B cell (primary cell): ENCODE measurements at regions of chr1 and their contacts with region 1.

Region 1: GRCh38 chr1:226083302-226084101 is 21.0 kb downstream of the H3-3A start:
- DNase-seq: peak; percentile 94
- ATAC-seq: peak; percentile 94
- H3K4me3 ChIP-seq: peak overlapping the region; percentile 15 to 83 (median 73)
- H3K4me3 Mint-ChIP-seq: peak overlapping the region; percentile 91
- H3K27ac ChIP-seq: peak overlapping the region; percentile 13 to 71
- H3K27ac Mint-ChIP-seq: peak overlapping the region; percentile 87
- H3K4me1 ChIP-seq: peaks cover 6 to 19% of the 10 kb centered on the region in 2 donors
- H3K4me1 Mint-ChIP-seq: peaks cover 13% of the 10 kb centered on the region
- H3K27me3 ChIP-seq: no peaks in the 10 kb centered on the region
- H3K27me3 Mint-ChIP-seq: no peaks in the 10 kb centered on the region
- CTCF ChIP-seq: no peak

Region 2: DNA sequence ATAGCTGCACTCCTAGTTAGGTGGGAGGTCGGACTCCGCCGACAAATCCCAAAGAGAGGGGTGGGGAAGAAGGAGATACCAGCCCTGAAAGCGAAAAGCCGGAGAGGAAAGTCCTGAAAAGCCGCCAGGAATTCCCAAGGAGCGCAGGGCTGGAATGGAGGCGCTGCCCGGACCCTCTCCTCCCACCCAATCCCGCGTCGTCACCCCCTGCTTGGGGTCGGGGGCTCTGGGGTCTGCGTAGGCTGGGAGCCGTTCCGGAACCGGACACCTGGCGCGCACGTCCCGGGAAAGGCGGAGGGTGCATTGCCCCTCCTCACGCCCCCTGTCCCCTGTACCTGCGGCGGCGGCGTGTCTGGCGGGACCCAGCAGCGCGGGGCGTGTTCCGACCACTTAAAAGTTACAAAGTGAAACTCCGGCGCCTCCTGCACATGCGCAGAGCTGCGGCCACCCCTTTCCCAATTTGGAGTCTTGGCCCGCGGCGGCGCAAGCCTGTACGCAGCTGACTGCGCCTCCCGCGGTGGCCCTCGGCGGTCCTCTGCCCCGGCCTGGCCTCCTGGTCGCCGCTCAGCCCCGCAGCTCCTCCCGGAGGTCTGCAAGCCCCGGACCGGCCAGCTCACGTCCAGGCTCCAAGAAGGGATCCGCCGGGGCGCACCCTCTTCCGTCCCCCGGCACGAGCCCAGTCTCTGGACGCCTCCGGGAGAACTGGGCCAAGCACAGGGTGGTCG is 201.4 kb before region 1 on chr1 and contains the start of gene TMEM63A:
- CTCF ChIA-PET with region 1: no interaction called
- POLR2A ChIA-PET with region 1: no interaction called
- intact Hi-C with region 1: no loop called
- DNase-seq: peak; percentile 91
- ATAC-seq: peak; percentile 78
- H3K4me3 ChIP-seq: peak within 1 kb of the TSS; percentile 86 to 99 (median 96)
- H3K4me3 Mint-ChIP-seq: peak within 1 kb of the TSS; percentile 96
- H3K27ac ChIP-seq: peak within 1 kb of the TSS; percentile 51 to 74
- H3K27ac Mint-ChIP-seq: peak within 1 kb of the TSS; percentile 91
- H3K4me1 ChIP-seq: peaks cover 30 to 42% of the 10 kb centered on the region in 2 donors
- H3K4me1 Mint-ChIP-seq: peaks cover 48% of the 10 kb centered on the region
- H3K27me3 ChIP-seq: no peaks in the 10 kb centered on the region
- H3K27me3 Mint-ChIP-seq: no peaks in the 10 kb centered on the region
- CTCF ChIP-seq: peak; percentile 23
- total RNA-seq, gene TMEM63A: 238 and 267 TPM in 2 replicates

Region 3: DNA sequence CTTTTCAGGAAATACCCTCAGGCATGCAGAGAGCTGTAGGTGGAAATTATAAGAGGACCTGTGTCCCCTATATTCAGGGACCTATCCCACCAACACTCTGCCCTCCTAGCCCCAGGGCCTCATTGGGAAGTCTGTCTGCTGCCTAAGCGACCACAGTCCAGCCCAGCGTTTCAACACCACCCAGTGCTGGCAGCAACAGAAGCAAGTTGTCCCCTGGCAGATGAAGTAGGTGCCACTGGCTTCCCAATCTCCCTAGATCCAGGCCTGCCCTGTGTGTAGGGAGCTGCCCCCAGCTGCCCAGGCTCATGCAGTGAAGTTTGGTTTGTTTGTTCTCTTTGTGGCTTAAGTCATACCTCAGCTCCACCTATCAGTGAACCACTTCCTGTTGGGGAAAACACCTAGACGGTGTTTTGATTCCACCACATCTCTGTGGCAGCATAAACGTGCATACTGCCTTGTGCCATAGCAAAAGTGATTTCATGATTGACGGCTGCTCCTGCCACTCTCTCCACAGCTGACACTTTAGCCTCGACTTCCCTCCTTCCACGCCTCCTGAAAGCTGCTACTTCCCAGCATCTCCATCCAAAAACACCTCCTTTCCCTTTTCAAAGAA is 186.5 kb before region 1 on chr1:
- CTCF ChIA-PET with region 1: no interaction called
- POLR2A ChIA-PET with region 1: no interaction called
- intact Hi-C with region 1: no loop called
- DNase-seq: peak; percentile 89
- ATAC-seq: peak; percentile 98
- H3K4me3 ChIP-seq: peak overlapping the region in 1 of 5 experiments; percentile 26
- H3K4me3 Mint-ChIP-seq: peak overlapping the region; percentile 71
- H3K27ac ChIP-seq: peak overlapping the region; percentile 86 to 97
- H3K27ac Mint-ChIP-seq: peak overlapping the region; percentile 98
- H3K4me1 ChIP-seq: peaks cover 34 to 36% of the 10 kb centered on the region in 2 donors
- H3K4me1 Mint-ChIP-seq: peaks cover 36% of the 10 kb centered on the region
- H3K27me3 ChIP-seq: no peaks in the 10 kb centered on the region
- H3K27me3 Mint-ChIP-seq: no peaks in the 10 kb centered on the region
- CTCF ChIP-seq: no peak

Region 4: DNA sequence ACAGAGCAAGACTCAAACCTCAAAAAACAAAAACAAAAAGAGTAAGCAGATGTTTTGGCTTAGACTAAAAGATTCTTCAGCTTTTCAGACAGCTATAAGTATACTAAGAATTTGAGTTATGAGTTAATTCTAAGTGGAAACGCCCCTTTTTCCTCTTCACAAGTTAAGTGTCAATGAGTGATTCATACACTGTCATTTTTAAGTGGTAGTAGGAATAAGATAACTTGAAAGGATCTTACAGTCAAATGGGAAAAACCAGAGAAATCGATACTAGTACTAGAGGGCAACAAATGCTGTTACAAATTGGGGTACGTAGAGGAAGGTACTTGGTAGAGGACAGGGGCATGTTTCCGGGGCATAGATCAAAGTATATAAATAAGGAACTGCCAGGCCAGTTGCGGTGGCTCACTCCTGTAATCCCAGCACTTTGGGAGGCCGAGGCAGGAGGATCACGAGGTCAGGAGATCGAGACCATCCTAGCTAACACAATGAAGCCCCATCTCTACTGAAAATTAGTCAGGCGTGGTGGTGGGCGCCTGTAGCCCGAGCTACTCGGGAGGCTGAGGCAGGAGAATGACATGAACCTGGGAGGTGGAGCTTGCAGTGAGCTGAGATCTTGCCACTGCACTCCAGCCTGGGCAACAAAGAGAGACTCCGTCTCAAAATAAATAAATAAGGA is 13.6 kb before region 1 on chr1:
- CTCF ChIA-PET with region 1: interaction called, 38 read pairs
- POLR2A ChIA-PET with region 1: interaction called, 11 read pairs
- intact Hi-C with region 1: loop called (anchors 1 kb)
- DNase-seq: no peak
- ATAC-seq: no peak
- H3K4me3 ChIP-seq: no peak overlapping the region
- H3K4me3 Mint-ChIP-seq: no peak overlapping the region
- H3K27ac ChIP-seq: peak overlapping the region in 1 of 2 donors; percentile 8
- H3K27ac Mint-ChIP-seq: no peak overlapping the region
- H3K4me1 ChIP-seq: peaks cover 27 to 30% of the 10 kb centered on the region in 2 donors
- H3K4me1 Mint-ChIP-seq: peaks cover 45% of the 10 kb centered on the region
- H3K27me3 ChIP-seq: no peaks in the 10 kb centered on the region
- H3K27me3 Mint-ChIP-seq: no peaks in the 10 kb centered on the region
- CTCF ChIP-seq: no peak

Region 5: GRCh38 chr1:226100436-226101391 is 17.2 kb after region 1 on chr1:
- CTCF ChIA-PET with region 1: interaction called, 7 read pairs
- POLR2A ChIA-PET with region 1: interaction called, 11 read pairs
- intact Hi-C with region 1: no loop called
- DNase-seq: peak; percentile 61
- ATAC-seq: peak; percentile 56
- H3K4me3 ChIP-seq: peak overlapping the region; percentile 44 to 76 (median 56)
- H3K4me3 Mint-ChIP-seq: peak overlapping the region; percentile 94
- H3K27ac ChIP-seq: no peak overlapping the region
- H3K27ac Mint-ChIP-seq: peak overlapping the region; percentile 15
- H3K4me1 ChIP-seq: peaks cover 3 to 10% of the 10 kb centered on the region in 2 donors
- H3K4me1 Mint-ChIP-seq: peaks cover 14% of the 10 kb centered on the region
- H3K27me3 ChIP-seq: no peaks in the 10 kb centered on the region
- H3K27me3 Mint-ChIP-seq: no peaks in the 10 kb centered on the region
- CTCF ChIP-seq: no peak

Region 6: DNA sequence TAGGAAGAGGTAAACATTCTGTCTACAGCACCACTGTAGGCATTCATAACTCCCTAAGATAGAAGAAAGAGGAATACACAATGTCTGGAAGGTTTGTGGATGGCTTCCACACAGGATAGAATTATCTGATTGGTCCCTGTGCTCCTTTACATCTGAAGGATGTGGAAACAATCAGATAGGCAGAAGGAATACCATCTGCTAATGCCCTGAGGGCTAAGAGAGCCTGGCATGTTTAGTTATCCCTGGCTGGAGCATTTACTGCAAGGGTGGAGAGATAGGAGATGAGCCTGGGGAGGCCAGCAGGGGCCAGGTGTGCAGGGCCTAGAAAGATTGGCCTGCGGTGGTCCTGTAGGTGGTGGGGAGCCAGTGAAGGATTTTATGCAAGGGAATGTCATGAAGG is 111.6 kb after region 1 on chr1:
- CTCF ChIA-PET with region 1: no interaction called
- POLR2A ChIA-PET with region 1: no interaction called
- intact Hi-C with region 1: loop called (anchors 5 kb)
- DNase-seq: no peak
- ATAC-seq: no peak
- H3K4me3 ChIP-seq: no peak overlapping the region
- H3K4me3 Mint-ChIP-seq: no peak overlapping the region
- H3K27ac ChIP-seq: no peak overlapping the region
- H3K27ac Mint-ChIP-seq: no peak overlapping the region
- H3K4me1 ChIP-seq: peaks cover 9 to 12% of the 10 kb centered on the region in 2 donors
- H3K4me1 Mint-ChIP-seq: peaks cover 13% of the 10 kb centered on the region
- H3K27me3 ChIP-seq: no peaks in the 10 kb centered on the region
- H3K27me3 Mint-ChIP-seq: no peaks in the 10 kb centered on the region
- CTCF ChIP-seq: no peak